ENCODE measurements at regions of chrX and their contacts with region 1.

Region 1: DNA sequence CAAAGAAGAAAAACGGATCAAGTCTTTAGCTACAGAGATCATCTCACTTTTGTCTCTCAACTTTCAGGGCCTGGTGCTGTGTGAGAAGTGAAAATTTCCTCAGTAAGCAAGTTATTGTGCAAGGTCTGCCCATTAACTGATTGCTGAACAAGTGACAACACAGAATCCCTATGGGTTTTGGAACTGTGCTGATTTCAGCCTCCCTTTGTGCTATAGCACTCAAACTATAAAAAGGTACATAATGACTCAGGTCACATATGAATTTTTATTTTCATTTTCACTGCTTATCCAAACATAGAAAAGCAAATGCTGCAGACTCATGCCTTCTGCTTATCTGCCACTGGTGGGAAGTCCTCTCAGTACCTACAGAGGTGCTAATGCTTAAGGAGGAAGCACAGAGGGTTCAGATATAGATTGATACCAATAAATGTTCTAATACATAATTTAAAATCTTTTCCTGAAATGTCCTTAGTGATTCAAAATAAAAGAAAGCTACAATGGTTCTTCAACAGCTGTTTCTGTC is 576.2 kb upstream of the CT83 start:
- DNase-seq: no peak
- ATAC-seq: no peak
- H3K4me3 ChIP-seq: no peak overlapping the region
- H3K27ac ChIP-seq: no peak overlapping the region
- H3K4me1 ChIP-seq: no peaks in the 10 kb centered on the region
- H3K27me3 ChIP-seq: no peaks in the 10 kb centered on the region
- CTCF ChIP-seq: no peak
- EP300 ChIP-seq: no peak
- POLR2A ChIP-seq: no peak
- RAD21 ChIP-seq: no peak

Region 2: DNA sequence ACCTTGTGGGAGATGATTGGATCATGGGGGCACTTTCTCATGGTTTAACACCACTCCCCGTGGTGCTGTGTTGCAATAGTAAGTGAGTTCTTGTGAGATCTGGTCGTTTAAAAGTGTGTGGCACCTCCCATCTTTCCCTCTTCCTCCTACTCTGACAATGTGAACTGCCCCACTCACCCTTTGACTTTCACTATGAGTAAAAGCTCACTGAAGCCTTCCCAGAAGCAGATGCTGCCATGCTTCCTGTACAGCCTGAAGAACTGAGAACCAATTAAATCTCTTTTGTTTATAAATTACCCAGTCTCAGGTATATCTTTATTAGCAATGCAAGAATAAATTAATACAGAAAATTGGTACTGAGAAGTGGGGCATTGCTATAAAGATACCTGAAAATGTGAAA is 66.6 kb before region 1 on chrX:
- CTCF ChIA-PET with region 1: no interaction called
- POLR2A ChIA-PET with region 1: no interaction called
- RAD21 ChIA-PET with region 1: no interaction called
- SMC1A ChIA-PET with region 1: no interaction called
- in situ Hi-C with region 1: loop called (anchors 10 kb)
- intact Hi-C with region 1: no loop called
- DNase-seq: no peak
- ATAC-seq: no peak
- H3K4me3 ChIP-seq: no peak overlapping the region
- H3K27ac ChIP-seq: no peak overlapping the region
- H3K4me1 ChIP-seq: no peaks in the 10 kb centered on the region
- H3K27me3 ChIP-seq: no peaks in the 10 kb centered on the region
- CTCF ChIP-seq: no peak
- EP300 ChIP-seq: no peak
- POLR2A ChIP-seq: no peak
- RAD21 ChIP-seq: no peak

Region 3: DNA sequence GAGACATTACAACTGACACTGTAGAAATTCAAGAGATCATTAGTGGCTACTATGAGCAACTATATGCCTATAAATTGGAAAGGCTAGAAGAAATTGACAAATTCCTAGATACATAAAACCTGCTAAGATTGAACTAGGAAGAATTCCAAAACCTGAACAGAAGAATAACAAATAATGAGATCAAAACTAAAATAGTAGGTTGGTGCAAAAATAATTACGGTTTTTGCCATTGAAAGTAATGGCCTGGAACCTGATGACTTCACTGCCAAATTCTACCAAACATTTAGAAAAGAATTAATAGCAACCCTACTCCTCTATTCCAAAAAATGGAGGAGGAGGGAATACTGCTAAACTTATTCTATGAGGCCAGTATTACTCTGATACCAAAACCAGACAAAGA is 252.8 kb after region 1 on chrX:
- CTCF ChIA-PET with region 1: no interaction called
- POLR2A ChIA-PET with region 1: no interaction called
- RAD21 ChIA-PET with region 1: no interaction called
- SMC1A ChIA-PET with region 1: no interaction called
- in situ Hi-C with region 1: no loop called
- intact Hi-C with region 1: no loop called
- DNase-seq: no peak
- ATAC-seq: no peak
- H3K4me3 ChIP-seq: no peak overlapping the region
- H3K27ac ChIP-seq: no peak overlapping the region
- H3K4me1 ChIP-seq: no peaks in the 10 kb centered on the region
- H3K27me3 ChIP-seq: no peaks in the 10 kb centered on the region
- CTCF ChIP-seq: no peak
- EP300 ChIP-seq: no peak
- POLR2A ChIP-seq: no peak
- RAD21 ChIP-seq: no peak

Measured in GM12878 (cell line).